Dorsolateral prefrontal cortex (tissue), 120 donors: ENCODE measurements at regions of chr5 and their contacts with region 1.

Region 1: DNA sequence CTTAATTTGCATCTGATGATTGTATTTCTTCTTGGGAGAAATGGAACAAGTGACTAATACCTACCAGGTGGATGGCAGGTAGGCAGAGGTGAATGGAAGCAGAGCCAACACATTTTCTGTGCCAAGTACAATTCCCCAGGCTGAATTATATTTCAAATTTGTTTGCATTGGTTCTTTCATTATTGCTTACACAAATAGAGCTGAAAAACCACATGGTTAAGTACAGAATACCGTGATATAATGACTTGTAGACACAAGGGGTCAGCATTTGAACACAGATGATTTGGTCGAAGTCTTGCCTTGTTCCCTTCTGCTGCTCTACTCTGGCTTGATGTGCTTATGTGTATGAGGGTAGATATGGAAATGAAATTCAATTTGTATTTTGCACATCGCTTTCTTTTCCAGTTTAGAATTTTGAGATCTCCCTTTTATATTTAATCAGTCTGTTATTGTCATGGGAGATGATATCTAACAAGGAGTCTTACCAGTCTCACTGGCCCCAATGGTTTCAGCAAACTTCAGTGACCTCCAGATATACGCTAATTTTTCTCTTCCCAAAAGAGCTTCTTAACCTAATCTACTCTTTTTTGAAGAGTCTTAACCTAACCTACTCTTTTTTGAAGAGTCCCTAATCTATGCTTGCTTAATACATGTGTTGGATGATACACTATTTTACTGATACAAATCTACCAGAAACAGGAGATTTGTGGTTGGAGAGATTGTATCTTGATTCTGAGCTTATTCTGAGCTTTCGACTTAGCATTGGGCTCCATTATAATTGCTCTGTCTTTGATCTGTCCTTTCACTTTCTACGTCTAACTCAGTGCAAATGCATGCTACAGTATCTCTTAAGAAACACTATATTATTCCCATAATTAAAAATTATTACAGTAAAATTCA is 88.1 kb downstream of the PCSK1 start:
- DNase-seq: no peak
- H3K4me3 ChIP-seq: no peak overlapping the region
- H3K27ac ChIP-seq: no peak overlapping the region
- H3K27me3 ChIP-seq: no peaks in the 10 kb centered on the region
- CTCF ChIP-seq: peak in 54 of 56 donors; percentile 45 to 84 (median 64)

Region 2: GRCh38 chr5:95446009-95446408 is 898.9 kb before region 1 on chr5:
- intact Hi-C with region 1: no loop called
- DNase-seq: no peak
- H3K4me3 ChIP-seq: no peak overlapping the region
- H3K27ac ChIP-seq: no peak overlapping the region
- H3K27me3 ChIP-seq: no peaks in the 10 kb centered on the region
- CTCF ChIP-seq: no peak

Region 3: GRCh38 chr5:96601811-96602244 is 256.9 kb after region 1 on chr5:
- intact Hi-C with region 1: loop called (anchors 1 to 5 kb)
- DNase-seq: peak in 3 of 10 donors; percentile 12 to 44 (median 39)
- H3K4me3 ChIP-seq: peak overlapping the region in 20 of 59 donors; percentile 2 to 44 (median 24)
- H3K27ac ChIP-seq: no peak overlapping the region
- H3K27me3 ChIP-seq: no peaks in the 10 kb centered on the region
- CTCF ChIP-seq: peak; percentile 69 to 91 (median 82)